Transverse colon (tissue), 4 donors: ENCODE measurements at regions of chr6 and their contacts with region 1.

Region 1: GRCh38 chr6:168895102-168895812 is 358.4 kb downstream of the THBS2 start:
- DNase-seq: peak; percentile 90
- H3K4me3 ChIP-seq: peak overlapping the region in 1 of 4 donors; percentile 5
- H3K27ac ChIP-seq: peak overlapping the region; percentile 51 to 69 (median 63)
- H3K4me1 ChIP-seq: peaks cover 3 to 16% (median 6%) of the 10 kb centered on the region in 4 donors
- H3K27me3 ChIP-seq: no peaks in the 10 kb centered on the region
- CTCF ChIP-seq: peak; percentile 90 to 97 (median 93)
- EP300 ChIP-seq: no peak
- POLR2A ChIP-seq: no peak

Region 2: GRCh38 chr6:168157272-168158007 is 737.8 kb before region 1 on chr6:
- in situ Hi-C with region 1: loop called in 1 of 4 experiments (anchors 25 kb)
- intact Hi-C with region 1: no loop called
- DNase-seq: no peak
- H3K4me3 ChIP-seq: no peak overlapping the region
- H3K27ac ChIP-seq: peak overlapping the region; percentile 54 to 78 (median 64)
- H3K4me1 ChIP-seq: peaks cover 10 to 63% (median 28%) of the 10 kb centered on the region in 4 donors
- H3K27me3 ChIP-seq: no peaks in the 10 kb centered on the region
- CTCF ChIP-seq: no peak
- EP300 ChIP-seq: peak; percentile 68
- POLR2A ChIP-seq: no peak

Region 3: GRCh38 chr6:168370310-168370991 is 524.8 kb before region 1 on chr6:
- in situ Hi-C with region 1: loop called in 1 of 4 experiments (anchors 25 kb)
- intact Hi-C with region 1: no loop called
- DNase-seq: peak; percentile 85
- H3K4me3 ChIP-seq: no peak overlapping the region
- H3K27ac ChIP-seq: no peak overlapping the region
- H3K4me1 ChIP-seq: peaks cover 0 to 7% (median 5%) of the 10 kb centered on the region in 4 donors
- H3K27me3 ChIP-seq: no peaks in the 10 kb centered on the region
- CTCF ChIP-seq: peak; percentile 87 to 93 (median 91)
- EP300 ChIP-seq: no peak
- POLR2A ChIP-seq: no peak

Region 4: GRCh38 chr6:169263836-169264608 is 368.8 kb after region 1 on chr6:
- in situ Hi-C with region 1: no loop called
- intact Hi-C with region 1: no loop called
- DNase-seq: peak; percentile 25
- H3K4me3 ChIP-seq: no peak overlapping the region
- H3K27ac ChIP-seq: no peak overlapping the region
- H3K4me1 ChIP-seq: no peaks in the 10 kb centered on the region
- H3K27me3 ChIP-seq: no peaks in the 10 kb centered on the region
- CTCF ChIP-seq: no peak
- EP300 ChIP-seq: no peak
- POLR2A ChIP-seq: no peak

Region 5: GRCh38 chr6:170529839-170530469 is 1634.7 kb after region 1 on chr6:
- in situ Hi-C with region 1: loop called in 1 of 4 experiments (anchors 10 kb)
- intact Hi-C with region 1: no loop called
- DNase-seq: peak; percentile 67
- H3K4me3 ChIP-seq: no peak overlapping the region
- H3K27ac ChIP-seq: no peak overlapping the region
- H3K4me1 ChIP-seq: no peaks in the 10 kb centered on the region
- H3K27me3 ChIP-seq: no peaks in the 10 kb centered on the region
- CTCF ChIP-seq: peak; percentile 71 to 87 (median 76)
- EP300 ChIP-seq: no peak
- POLR2A ChIP-seq: no peak